Panc1 (cell line): ENCODE measurements at regions of chr1 and their contacts with region 1.

Region 1: DNA sequence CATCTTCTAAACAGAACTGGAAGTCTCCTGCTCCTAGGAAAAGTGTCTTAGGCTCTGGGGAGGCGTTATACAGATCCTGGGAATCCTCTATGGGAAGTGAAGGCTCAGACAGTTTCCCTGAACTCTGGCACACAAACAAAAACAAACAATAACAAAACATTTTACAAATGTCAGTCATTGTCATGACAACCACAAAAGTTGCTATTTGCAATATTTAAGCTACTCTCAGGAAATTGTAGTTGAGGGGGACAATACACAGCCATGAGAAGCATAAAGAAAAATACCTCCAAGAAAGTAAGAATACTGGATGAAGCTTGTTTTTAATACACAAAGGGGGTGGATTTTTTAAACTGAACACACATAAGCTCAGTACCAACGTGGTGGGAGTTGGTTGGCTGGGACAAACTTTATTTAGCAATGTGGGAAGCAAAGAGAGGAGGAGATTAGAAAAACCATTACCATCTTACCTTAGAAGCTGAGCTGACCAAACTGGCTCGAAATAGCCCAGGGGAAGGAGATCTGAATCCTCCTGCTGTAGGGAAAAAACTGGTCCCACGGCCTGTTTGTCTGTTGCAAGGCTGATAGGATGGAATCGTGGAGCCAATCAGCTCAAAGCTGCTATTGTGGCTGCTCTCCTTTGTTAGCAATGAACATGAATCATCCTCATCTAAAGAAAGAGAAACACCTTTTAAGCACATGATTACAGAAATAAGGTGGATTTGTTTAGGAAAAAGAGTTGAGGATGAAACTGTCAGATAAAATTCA is 21.7 kb downstream of the CLSPN start:
- DNase-seq: no peak
- ATAC-seq: no peak
- H3K4me3 ChIP-seq: no peak overlapping the region
- H3K27ac ChIP-seq: no peak overlapping the region
- H3K4me1 ChIP-seq: no peaks in the 10 kb centered on the region
- H3K27me3 ChIP-seq: no peaks in the 10 kb centered on the region
- CTCF ChIP-seq: no peak

Region 2: DNA sequence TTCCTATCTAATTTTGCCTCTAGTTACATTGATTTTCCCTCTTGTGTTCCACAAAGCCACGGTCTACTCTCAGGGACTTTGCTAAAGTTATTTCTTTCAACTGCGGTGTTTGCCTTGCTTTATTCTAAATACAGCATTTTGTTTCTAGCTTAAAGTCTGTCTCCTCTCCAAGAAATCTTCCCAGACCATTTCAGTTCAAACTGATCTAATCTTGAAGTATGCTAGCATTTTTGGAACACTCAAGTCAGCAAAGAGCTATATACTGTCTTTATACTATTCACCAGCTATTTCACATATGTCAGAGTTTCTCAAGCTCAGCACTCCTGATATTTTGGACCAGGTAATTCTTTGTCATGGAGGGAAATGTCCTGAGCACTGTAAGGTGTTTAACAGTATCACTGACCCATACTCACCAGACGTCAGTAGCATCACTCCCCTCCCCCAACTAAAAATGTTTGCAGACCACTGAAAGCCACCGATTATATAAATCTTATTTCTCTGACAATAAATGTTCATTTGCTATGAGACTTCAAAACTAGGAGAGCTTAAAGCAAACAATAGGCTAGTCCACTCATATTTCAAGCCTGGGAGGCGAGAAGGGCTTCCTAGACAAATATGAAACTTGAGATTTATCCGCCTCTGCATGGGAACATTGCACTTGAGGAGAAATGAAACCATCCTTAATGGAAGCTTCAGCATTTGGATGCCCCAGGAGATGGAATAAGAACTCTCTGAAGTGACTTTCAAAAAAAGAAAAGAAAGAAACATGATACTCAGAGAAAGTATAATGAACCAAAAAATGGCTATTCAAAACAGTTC is 272.1 kb before region 1 on chr1:
- CTCF ChIA-PET with region 1: no interaction called
- POLR2A ChIA-PET with region 1: no interaction called
- in situ Hi-C with region 1: no loop called
- intact Hi-C with region 1: no loop called
- DNase-seq: no peak
- ATAC-seq: no peak
- H3K4me3 ChIP-seq: no peak overlapping the region
- H3K27ac ChIP-seq: no peak overlapping the region
- H3K4me1 ChIP-seq: no peaks in the 10 kb centered on the region
- H3K27me3 ChIP-seq: no peaks in the 10 kb centered on the region
- CTCF ChIP-seq: no peak

Region 3: DNA sequence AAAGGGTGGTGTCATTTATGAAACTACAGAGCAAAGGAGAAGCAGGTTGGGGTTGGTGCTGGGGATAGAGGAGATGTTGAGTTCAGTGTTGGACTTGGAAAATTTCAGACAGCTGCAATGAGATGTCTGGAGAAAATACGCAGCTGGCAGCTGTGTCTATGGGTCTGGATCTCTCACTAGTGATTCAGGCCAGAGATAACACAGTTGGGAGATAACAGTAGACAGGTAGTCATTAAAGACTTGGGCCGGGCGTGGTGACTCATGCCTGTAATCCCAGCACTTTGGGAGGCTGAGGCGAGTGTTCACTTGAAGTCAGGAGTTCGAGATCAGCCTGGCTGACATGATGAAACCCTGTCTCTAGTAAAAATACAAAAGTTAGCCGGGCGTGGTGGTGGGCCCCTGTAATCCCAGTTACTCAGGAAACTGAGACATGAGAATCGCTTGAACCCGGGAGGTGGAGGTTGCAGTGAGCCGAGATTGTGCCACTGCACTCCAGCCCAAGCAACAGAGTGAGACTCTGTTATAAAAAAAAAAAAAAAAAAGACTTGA is 177.5 kb before region 1 on chr1:
- CTCF ChIA-PET with region 1: no interaction called
- POLR2A ChIA-PET with region 1: interaction called, 11 read pairs
- in situ Hi-C with region 1: no loop called
- intact Hi-C with region 1: no loop called
- DNase-seq: no peak
- ATAC-seq: no peak
- H3K4me3 ChIP-seq: no peak overlapping the region
- H3K27ac ChIP-seq: no peak overlapping the region
- H3K4me1 ChIP-seq: peaks cover 4% of the 10 kb centered on the region
- H3K27me3 ChIP-seq: no peaks in the 10 kb centered on the region
- CTCF ChIP-seq: no peak